PC-3 (cell line): ENCODE measurements at regions of chr13 and their contacts with region 1.

Region 1: GRCh38 chr13:40401911-40402776 is 264.3 kb downstream of the FOXO1 start:
- DNase-seq: peak; percentile 89
- ATAC-seq: peak; percentile 70
- H3K4me3 ChIP-seq: peak overlapping the region; percentile 17; the same call in 1 of the 2 replicates
- H3K27ac ChIP-seq: peak overlapping the region; percentile 83
- H3K4me1 ChIP-seq: peaks cover 41% of the 10 kb centered on the region
- H3K27me3 ChIP-seq: no peaks in the 10 kb centered on the region
- CTCF ChIP-seq: no peak

Region 2: DNA sequence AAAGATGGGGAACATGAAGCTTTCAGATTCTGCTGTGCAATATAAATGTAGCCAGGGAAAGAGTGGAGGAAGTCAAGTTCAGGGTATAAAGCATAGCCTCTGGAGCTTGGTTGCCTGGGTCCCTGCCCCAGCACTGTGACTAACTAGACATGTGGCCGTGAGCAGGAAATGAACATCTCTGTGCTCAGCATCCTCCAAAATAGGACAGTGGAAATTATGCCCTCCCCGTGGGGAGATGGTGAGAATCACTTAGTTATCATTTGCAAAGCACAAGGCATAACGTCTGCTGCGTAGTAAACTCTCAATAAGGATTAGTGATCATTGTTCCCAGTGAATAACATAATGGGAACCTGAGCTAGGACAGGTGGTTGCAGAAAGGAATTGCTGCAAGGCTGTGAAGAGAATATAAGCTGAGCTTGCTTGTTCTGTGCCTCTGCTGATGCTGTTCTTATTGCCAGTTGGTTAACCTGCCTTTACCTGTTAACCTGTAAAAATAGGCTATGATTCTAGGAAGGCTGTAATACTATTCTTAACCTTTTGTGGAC is 305.7 kb before region 1 on chr13:
- CTCF ChIA-PET with region 1: no interaction called
- POLR2A ChIA-PET with region 1: no interaction called
- intact Hi-C with region 1: no loop called
- DNase-seq: no peak
- ATAC-seq: no peak
- H3K4me3 ChIP-seq: no peak overlapping the region
- H3K27ac ChIP-seq: no peak overlapping the region
- H3K4me1 ChIP-seq: no peaks in the 10 kb centered on the region
- H3K27me3 ChIP-seq: no peaks in the 10 kb centered on the region
- CTCF ChIP-seq: no peak

Region 3: DNA sequence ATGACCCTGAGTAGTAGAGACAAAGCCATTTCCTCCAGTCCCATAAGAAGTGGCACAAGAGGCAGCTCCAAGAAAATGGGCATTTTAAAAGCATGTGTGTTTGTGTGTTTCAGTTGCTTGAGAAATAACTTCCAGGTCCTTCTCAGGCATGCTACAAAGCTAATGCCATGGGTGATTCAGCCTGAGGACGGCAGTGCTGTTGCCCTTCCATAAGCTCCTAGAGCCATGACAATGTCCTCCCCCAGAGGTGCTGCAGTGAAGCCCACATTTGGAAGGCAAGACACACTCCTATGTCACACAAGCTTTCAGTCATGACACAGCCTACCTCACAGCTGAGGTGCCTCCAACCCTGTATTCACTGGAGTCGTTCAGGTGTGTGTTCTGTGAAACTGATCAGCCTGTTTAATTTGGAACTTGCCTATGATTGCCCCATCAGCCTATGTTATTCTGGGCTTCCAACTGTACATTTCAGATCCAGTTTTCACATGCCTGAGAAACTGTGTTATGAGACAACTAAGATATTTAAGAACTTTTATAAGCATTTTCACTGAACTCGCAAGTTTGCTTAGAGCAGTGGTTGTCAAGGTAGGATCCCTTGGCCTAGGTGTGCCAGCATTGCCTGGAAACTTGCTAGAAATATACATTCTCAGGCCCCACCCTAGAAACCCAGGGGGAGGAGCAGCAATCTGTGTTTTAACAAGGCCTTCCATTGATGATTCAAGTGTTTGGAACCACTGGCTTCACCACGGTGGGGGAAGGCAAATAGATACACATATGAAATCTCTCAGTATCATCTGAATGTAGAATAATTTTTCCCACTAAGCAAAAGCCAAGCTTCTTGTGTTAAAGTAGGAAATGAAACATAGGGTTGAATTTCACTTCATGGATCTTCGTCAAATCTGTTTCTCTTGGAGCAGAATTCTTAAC is 50.9 kb after region 1 on chr13:
- CTCF ChIA-PET with region 1: no interaction called
- POLR2A ChIA-PET with region 1: no interaction called
- intact Hi-C with region 1: loop called (anchors 5 kb)
- DNase-seq: peak; percentile 86
- ATAC-seq: peak; percentile 89
- H3K4me3 ChIP-seq: peak overlapping the region; percentile 31; the same call in 1 of the 2 replicates
- H3K27ac ChIP-seq: peak overlapping the region; percentile 97
- H3K4me1 ChIP-seq: peaks cover 24% of the 10 kb centered on the region
- H3K27me3 ChIP-seq: no peaks in the 10 kb centered on the region
- CTCF ChIP-seq: no peak

Region 4: DNA sequence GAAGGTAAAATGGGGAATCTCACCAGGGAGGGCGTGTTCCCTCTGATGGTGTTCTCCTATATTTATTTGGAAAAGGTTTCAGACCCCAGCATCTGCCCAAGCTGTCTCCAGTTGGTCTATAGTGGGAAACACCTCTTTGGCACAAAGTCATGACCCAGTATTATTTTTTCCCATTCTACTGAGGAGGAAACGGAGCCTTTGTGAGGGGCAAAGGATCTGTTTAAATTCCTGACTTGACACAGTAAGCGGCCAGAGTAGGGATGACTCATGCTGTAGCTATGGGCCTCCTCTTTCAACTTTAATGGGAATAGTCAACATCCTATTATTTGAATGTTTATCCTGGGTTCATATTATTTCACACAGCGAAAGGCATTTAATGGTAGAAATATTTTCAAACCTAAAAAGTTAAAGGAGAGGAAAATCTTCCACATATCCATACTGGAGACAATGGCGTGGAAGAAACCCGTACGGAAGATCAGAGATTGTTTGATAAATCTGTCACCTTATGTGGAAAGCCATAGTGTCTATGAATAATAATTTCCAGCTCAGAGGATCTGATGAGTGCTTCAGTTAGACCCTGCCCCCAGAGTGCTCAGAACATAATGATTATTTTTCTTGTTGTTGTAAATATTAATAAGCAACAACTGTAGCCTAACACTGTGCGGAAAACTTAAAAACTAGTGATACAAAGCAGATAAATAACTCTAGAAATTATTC is 138.3 kb after region 1 on chr13:
- CTCF ChIA-PET with region 1: no interaction called
- POLR2A ChIA-PET with region 1: no interaction called
- intact Hi-C with region 1: loop called (anchors 10 kb)
- DNase-seq: peak; percentile 84
- ATAC-seq: peak; percentile 98
- H3K4me3 ChIP-seq: no peak overlapping the region
- H3K27ac ChIP-seq: peak overlapping the region; percentile 56
- H3K4me1 ChIP-seq: peaks cover 17% of the 10 kb centered on the region
- H3K27me3 ChIP-seq: no peaks in the 10 kb centered on the region
- CTCF ChIP-seq: no peak

Region 5: GRCh38 chr13:40671956-40672764 is 270.0 kb after region 1 on chr13:
- CTCF ChIA-PET with region 1: no interaction called
- POLR2A ChIA-PET with region 1: no interaction called
- intact Hi-C with region 1: loop called (anchors 5 kb)
- DNase-seq: peak; percentile 88
- ATAC-seq: peak; percentile 77
- H3K4me3 ChIP-seq: 0 out of 2 replicates have a peak overlapping the region, but pooled peaks have one; percentile 0
- H3K27ac ChIP-seq: peak overlapping the region; percentile 64
- H3K4me1 ChIP-seq: peaks cover 19% of the 10 kb centered on the region
- H3K27me3 ChIP-seq: no peaks in the 10 kb centered on the region
- CTCF ChIP-seq: no peak